Panc1 (cell line): ENCODE measurements at regions of chr7 and their contacts with region 1.

Region 1: DNA sequence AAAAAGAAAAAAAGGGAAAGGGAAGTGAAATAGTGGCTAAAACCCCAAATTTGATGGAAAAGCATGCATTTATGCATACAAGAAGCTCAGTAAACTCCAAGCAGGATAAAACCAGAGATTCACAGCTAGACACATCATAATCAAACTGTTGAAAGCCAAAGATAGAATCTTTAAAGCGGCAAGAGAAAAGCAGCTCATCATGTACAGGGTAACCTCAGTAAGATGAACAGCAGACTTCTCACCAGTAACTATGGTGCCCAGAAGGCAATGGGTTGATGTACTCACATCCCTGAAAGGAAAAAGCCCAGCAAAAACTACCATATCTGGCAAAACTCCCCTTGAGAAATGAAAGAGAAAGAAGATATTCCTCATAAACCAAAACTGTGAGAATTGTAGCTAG is 60.4 kb downstream of the TPST1 start:
- DNase-seq: no peak
- ATAC-seq: no peak
- H3K4me3 ChIP-seq: no peak overlapping the region
- H3K27ac ChIP-seq: no peak overlapping the region
- H3K4me1 ChIP-seq: no peaks in the 10 kb centered on the region
- H3K27me3 ChIP-seq: no peaks in the 10 kb centered on the region
- CTCF ChIP-seq: no peak

Region 2: GRCh38 chr7:66204822-66205740 is 60.5 kb before region 1 on chr7 and contains the start of gene TPST1:
- CTCF ChIA-PET with region 1: no interaction called
- POLR2A ChIA-PET with region 1: interaction called, 12 read pairs
- in situ Hi-C with region 1: no loop called
- intact Hi-C with region 1: no loop called
- DNase-seq: peak; percentile 69
- ATAC-seq: peak; percentile 98
- H3K4me3 ChIP-seq: peak within 1 kb of the TSS; percentile 57 to 80
- H3K27ac ChIP-seq: peak within 1 kb of the TSS; percentile 78
- H3K4me1 ChIP-seq: peaks cover 17% of the 10 kb centered on the region
- H3K27me3 ChIP-seq: no peaks in the 10 kb centered on the region
- CTCF ChIP-seq: peak; percentile 82; the same call in 1 of the 2 replicates
- total RNA-seq, gene TPST1: 29.0 TPM

Region 3: DNA sequence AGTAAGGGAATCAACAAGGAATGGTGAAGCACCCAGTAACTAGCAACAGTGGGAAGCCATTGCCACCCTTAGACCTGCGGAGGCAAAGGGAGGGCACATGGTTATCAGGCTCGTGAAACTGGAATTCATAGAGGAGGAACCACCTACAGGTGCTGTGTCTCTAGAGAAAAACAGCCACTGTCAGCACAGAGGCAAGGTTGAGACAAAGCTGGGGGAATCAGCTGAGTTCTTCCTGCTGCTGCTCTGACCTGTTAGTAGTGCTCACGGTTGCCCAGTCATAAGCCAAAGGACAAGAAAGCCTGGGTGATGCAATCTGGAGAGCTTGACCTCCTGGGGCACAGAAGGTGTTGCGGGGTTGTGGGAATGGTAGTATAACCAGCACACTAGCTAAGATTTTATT is 49.6 kb after region 1 on chr7:
- CTCF ChIA-PET with region 1: no interaction called
- POLR2A ChIA-PET with region 1: no interaction called
- in situ Hi-C with region 1: no loop called
- intact Hi-C with region 1: loop called (anchors 5 kb)
- DNase-seq: no peak
- ATAC-seq: peak; percentile 68
- H3K4me3 ChIP-seq: no peak overlapping the region
- H3K27ac ChIP-seq: no peak overlapping the region
- H3K4me1 ChIP-seq: no peaks in the 10 kb centered on the region
- H3K27me3 ChIP-seq: no peaks in the 10 kb centered on the region
- CTCF ChIP-seq: no peak

Region 4: DNA sequence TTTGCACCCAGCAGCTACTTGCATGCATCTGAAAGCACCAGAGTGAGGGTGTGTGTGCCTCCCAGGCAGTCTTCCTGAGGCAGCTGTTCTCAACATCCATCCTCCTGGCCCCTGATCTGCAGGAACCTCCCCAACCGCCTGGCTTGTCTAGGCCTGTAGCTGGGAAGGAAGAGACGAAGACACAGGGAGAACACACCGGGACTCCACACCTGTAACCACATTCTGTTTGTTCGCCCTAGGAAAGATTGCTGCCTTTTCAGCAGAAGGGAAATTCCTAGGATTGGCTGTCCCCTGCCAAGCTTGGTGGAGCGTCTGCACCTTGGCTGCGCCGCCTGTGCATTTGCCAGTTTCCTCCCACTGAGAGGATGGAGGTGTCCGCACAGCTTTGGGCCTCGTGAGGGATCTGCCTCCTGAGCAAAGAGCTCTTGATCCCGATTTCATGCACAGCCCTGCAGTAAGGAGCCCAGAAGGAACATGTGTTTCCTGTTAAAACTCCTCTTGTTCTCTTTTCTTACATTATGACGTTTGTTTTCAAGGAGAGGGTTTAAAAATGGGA is 94.2 kb after region 1 on chr7:
- CTCF ChIA-PET with region 1: no interaction called
- POLR2A ChIA-PET with region 1: no interaction called
- in situ Hi-C with region 1: no loop called
- intact Hi-C with region 1: no loop called
- DNase-seq: no peak
- ATAC-seq: no peak; the same call in 1 of the 2 replicates
- H3K4me3 ChIP-seq: no peak overlapping the region
- H3K27ac ChIP-seq: no peak overlapping the region
- H3K4me1 ChIP-seq: no peaks in the 10 kb centered on the region
- H3K27me3 ChIP-seq: no peaks in the 10 kb centered on the region
- CTCF ChIP-seq: no peak